HEK293T (cell line): ENCODE measurements at regions of chr2 and their contacts with region 1.

Region 1: GRCh38 chr2:23188658-23189057 is 196.3 kb upstream of the KLHL29 start:
- DNase-seq: no peak

Region 2: GRCh38 chr2:23199115-23199918 is 10.7 kb after region 1 on chr2:
- CTCF ChIA-PET with region 1: interaction called, 12 read pairs
- POLR2A ChIA-PET with region 1: no interaction called
- DNase-seq: peak; percentile 24